ENCODE measurements at regions of chr9 and their contacts with region 1.

Region 1: GRCh38 chr9:127396808-127397497 is at the start of gene SLC2A8:
- DNase-seq: peak; percentile 96 to 99
- ATAC-seq: peak; percentile 87 to 96
- H3K4me3 ChIP-seq: peak within 1 kb of the TSS; percentile 90
- H3K27ac ChIP-seq: peak within 1 kb of the TSS; percentile 80 to 90
- H3K4me1 ChIP-seq: peaks cover 6% of the 10 kb centered on the region; the same call in 1 of the 3 replicates
- CTCF ChIP-seq: no peak; the same call in 2 of the 3 replicates
- EP300 ChIP-seq: no peak
- POLR2A ChIP-seq: peak; percentile 82
- RAD21 ChIP-seq: peak in 1 of 2 experiments; percentile 43; a peak in 1 of 5 replicates
- polyA plus RNA-seq, gene SLC2A8: 7.3 and 8.3 TPM in 2 replicates

Region 2: DNA sequence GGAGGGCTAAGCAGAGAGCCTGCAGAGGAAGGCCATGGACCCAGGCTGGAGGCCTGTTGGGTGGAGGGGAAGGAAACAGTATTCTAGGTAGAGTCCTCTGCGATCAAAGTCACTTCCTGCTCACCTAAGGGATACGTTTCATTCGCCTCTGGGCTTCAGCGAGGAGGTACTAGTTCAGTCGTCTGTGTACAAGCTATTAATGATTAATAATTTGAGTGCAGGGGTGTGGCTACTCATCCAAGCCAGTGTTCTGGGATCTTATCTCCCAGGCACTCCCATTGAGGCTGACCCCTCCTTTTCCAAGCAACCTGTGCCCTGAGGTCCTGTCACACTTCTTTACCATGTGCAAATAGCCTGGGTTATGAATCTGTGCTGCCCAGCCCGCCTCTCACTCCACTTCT is 457.1 kb before region 1 on chr9:
- CTCF ChIA-PET with region 1: interaction called, 24 read pairs
- POLR2A ChIA-PET with region 1: no interaction called
- DNase-seq: peak; percentile 46 to 50
- ATAC-seq: peak; percentile 48 to 57; a peak in 4 of 6 replicates
- H3K4me3 ChIP-seq: no peak overlapping the region
- H3K27ac ChIP-seq: no peak overlapping the region
- H3K4me1 ChIP-seq: peaks cover 12% of the 10 kb centered on the region
- CTCF ChIP-seq: no peak
- EP300 ChIP-seq: no peak
- POLR2A ChIP-seq: no peak
- RAD21 ChIP-seq: no peak

Region 3: DNA sequence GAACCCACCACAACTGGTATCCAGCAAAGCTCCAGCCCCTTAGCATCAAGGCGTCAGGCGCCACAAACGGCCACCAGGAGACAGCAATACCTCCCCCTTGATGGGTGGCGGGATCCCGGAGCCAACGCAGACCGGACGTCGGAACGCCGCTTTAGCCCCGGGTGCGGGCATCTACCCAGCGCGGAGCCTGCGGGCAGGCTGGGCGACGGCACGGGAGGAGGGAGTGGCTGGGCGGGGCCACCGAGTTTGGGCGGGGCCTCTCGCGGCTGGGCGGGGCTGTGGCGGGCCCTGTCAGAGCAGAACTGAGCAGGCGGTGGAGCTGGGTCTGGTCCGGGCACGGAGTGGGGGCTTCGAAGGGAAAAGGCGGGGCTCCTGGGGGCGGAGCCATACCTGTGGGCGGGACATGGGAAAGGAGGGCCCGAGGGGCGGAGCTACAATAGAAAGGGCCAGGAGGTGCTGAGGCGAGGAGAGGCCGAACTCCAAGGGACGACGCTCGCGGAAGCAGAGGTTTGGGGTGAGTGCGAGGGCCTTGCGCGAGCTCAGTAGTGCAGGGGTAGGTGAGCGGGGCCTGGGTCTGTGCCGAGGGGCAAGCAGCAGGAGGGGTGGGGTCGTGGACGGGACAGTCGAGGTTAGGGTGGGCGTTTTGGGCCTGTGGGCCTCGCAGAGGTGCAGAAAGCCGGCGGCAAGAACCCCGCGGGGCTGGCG is 172.6 kb before region 1 on chr9:
- CTCF ChIA-PET with region 1: interaction called, 11 read pairs
- POLR2A ChIA-PET with region 1: interaction called, 23 read pairs
- DNase-seq: peak; percentile 91 to 93
- ATAC-seq: peak; percentile 56 to 91
- H3K4me3 ChIP-seq: peak overlapping the region; percentile 93
- H3K27ac ChIP-seq: peak overlapping the region; percentile 74 to 91
- H3K4me1 ChIP-seq: peaks cover 12% of the 10 kb centered on the region; the same call in 2 of the 3 replicates
- CTCF ChIP-seq: no peak
- EP300 ChIP-seq: no peak
- POLR2A ChIP-seq: no peak; the same call in 1 of the 2 replicates
- RAD21 ChIP-seq: no peak

Region 4: DNA sequence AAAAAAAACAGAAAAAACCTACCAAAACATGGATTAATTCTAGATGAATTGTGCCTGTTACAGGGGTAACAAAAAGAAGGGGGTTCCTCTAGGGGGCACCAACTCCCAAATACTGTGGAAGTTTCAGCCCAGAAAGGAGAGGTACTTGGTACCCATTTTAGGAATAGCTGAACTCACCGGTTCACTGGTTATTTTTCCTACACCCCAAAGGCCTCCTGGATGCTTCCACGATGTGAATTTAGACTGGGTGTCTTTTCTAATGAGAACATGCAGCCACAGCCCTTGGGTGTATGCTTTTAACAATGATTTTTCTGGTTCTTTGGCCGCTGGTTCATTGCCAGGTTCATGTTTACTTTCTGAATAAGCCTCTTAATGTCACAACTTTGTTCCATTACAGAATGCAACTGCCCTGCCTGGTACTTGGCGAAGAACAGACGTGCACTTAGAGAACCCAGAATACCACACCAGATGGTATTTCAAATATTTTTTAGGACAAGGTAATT is 85.7 kb before region 1 on chr9:
- CTCF ChIA-PET with region 1: interaction called, 12 read pairs
- POLR2A ChIA-PET with region 1: interaction called, 3 read pairs
- DNase-seq: peak; percentile 33 to 60
- ATAC-seq: peak; percentile 88 to 89; a peak in 4 of 6 replicates
- H3K4me3 ChIP-seq: no peak overlapping the region
- H3K27ac ChIP-seq: peak overlapping the region; percentile 60 to 74
- H3K4me1 ChIP-seq: peaks cover 47% of the 10 kb centered on the region
- CTCF ChIP-seq: peak; percentile 84
- EP300 ChIP-seq: no peak
- POLR2A ChIP-seq: no peak
- RAD21 ChIP-seq: peak; percentile 69 to 74

Region 5: DNA sequence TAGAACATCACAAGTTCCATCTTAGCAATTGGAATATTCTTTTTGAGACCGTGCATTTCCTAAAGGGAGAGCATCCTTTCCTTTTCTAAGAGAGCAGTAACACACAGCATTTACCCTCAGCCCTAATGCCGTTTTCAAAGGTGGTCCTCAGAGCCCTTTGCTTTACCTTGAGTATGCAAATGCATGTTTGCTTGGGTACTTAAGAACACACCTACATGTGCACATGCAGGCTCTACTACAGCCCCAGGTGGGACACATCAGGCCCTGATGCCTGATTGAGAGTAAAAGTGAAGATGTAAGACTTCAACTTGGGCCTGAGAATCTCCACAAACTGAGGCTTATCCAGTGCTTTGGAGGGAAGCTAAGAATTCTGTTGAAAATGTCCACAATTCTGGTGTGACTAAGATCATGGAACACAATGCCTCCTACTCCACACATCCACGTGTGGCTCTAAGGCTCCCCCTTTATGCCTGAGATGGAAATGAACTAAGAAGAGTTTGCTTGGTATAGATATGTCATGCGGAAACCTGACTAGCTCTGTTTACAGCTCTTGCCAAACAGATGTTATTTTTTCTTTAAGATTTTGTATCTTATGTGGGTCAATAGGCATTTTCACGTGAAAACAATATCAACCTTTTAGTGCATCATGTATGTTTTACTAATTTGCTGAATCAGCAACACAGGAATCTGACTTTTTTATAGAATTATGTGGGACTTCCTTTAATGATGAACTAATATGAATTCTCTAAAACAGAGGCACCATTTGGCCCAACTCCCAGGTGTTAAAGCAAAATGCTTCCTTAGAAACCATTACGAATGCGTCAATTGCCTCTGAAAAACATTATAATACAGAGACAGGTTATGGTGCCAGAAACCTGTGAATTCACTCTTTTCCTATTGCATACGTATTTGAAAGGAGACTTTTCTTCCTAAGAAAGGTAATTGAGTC is 48.8 kb before region 1 on chr9:
- CTCF ChIA-PET with region 1: interaction called, 12 read pairs
- POLR2A ChIA-PET with region 1: no interaction called
- DNase-seq: peak; percentile 55 to 71
- ATAC-seq: peak; percentile 94 to 95
- H3K4me3 ChIP-seq: no peak overlapping the region
- H3K27ac ChIP-seq: no peak overlapping the region; a peak in 1 of 6 replicates
- H3K4me1 ChIP-seq: peaks cover 4% of the 10 kb centered on the region; the same call in 1 of the 3 replicates
- CTCF ChIP-seq: peak; percentile 73
- EP300 ChIP-seq: no peak
- POLR2A ChIP-seq: no peak
- RAD21 ChIP-seq: peak; percentile 80 to 91

Region 6: DNA sequence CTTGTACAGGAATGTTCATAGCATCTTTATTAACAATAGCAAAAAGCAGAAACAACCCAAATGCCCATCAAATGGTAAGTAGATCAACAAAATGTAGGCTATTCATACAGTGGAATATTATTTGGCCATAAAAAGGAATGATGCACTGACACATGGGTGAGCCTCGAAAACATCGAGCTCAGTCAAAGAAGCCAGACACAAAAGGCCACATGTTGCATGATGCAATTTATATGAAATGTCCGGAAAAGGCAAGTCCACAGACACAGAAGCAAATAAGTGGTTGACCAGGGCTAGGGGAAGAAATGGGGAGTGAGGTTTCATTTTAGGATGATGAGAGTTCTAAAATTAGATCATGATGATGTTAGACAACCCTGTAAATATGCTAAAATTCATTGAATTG is 16.5 kb before region 1 on chr9:
- CTCF ChIA-PET with region 1: interaction called, 13 read pairs
- POLR2A ChIA-PET with region 1: interaction called, 5 read pairs
- DNase-seq: no peak
- ATAC-seq: no peak
- H3K4me3 ChIP-seq: no peak overlapping the region
- H3K27ac ChIP-seq: 0 out of 6 replicates have a peak overlapping the region, but pooled peaks of 1 of the 2 experiments have one; percentile 10
- H3K4me1 ChIP-seq: peaks cover 4% of the 10 kb centered on the region; the same call in 1 of the 3 replicates
- CTCF ChIP-seq: no peak
- EP300 ChIP-seq: no peak
- POLR2A ChIP-seq: no peak
- RAD21 ChIP-seq: no peak

Region 7: GRCh38 chr9:127423934-127424675 is 27.2 kb after region 1 on chr9 and contains the start of gene ZNF79:
- CTCF ChIA-PET with region 1: interaction called, 3 read pairs
- POLR2A ChIA-PET with region 1: interaction called, 11 read pairs
- DNase-seq: peak; percentile 92 to 97
- ATAC-seq: peak; percentile 99 to 100
- H3K4me3 ChIP-seq: peak within 1 kb of the TSS; percentile 86
- H3K27ac ChIP-seq: peak within 1 kb of the TSS; percentile 77 to 93
- H3K4me1 ChIP-seq: peaks cover 10% of the 10 kb centered on the region; the same call in 2 of the 3 replicates
- CTCF ChIP-seq: no peak
- EP300 ChIP-seq: no peak
- POLR2A ChIP-seq: peak; percentile 74
- RAD21 ChIP-seq: no peak
- polyA plus RNA-seq, gene ZNF79: 5.7 and 7.4 TPM in 2 replicates

Measured in A549 (cell line).